A673 (cell line): ENCODE measurements at regions of chr3 and their contacts with region 1.

Region 1: GRCh38 chr3:87792534-87793336 is 266.1 kb downstream of the CGGBP1 start:
- DNase-seq: peak; percentile 81
- H3K4me3 ChIP-seq: peak within 1 kb of the TSS; percentile 68
- H3K27ac ChIP-seq: peak within 1 kb of the TSS; percentile 91
- H3K4me1 ChIP-seq: peaks cover 29% of the 10 kb centered on the region
- H3K27me3 ChIP-seq: no peaks in the 10 kb centered on the region
- CTCF ChIP-seq: peak; percentile 45

Region 2: GRCh38 chr3:87247430-87247773 is 545.3 kb before region 1 on chr3:
- CTCF ChIA-PET with region 1: no interaction called
- POLR2A ChIA-PET with region 1: no interaction called
- intact Hi-C with region 1: no loop called
- DNase-seq: no peak
- H3K4me3 ChIP-seq: no peak overlapping the region
- H3K27ac ChIP-seq: no peak overlapping the region
- H3K4me1 ChIP-seq: no peaks in the 10 kb centered on the region
- H3K27me3 ChIP-seq: no peaks in the 10 kb centered on the region
- CTCF ChIP-seq: no peak

Region 3: DNA sequence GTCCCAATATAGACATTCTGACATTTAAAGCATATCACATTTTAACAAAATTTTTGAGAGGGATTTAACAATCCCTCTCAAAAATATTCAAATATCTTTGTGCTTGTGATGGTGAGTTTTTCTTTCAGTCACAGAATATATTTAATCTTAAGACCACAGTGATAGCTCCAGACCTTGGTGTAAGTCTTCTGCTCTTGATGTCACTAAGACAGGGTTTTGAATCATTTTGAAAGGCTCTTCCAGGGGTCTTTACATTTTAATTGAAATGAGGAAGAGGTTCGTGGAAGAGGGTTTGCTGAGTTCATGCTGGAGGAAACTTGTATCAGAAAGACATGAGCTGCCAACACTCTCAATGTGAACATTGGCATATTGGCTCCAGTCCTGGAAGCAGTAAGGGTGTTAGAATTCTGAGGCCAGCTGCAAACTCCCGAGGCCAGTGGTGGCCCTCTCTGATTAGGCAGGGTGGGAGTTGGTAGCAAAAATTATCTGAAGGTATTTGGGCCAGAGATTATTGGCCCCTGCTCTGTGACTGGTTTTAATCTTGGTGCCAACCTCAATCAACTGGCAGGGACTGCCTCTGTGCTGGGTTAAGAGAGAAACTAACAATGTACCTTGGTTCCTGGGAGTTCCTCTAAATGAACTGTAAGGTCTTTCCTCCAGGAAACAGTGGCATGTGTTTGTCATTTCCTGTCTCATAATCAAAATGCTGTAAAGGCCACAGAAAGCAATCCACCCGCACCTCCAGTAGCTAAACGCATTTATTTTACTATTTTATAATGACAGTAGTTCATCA is 521.6 kb before region 1 on chr3:
- CTCF ChIA-PET with region 1: no interaction called
- POLR2A ChIA-PET with region 1: no interaction called
- intact Hi-C with region 1: loop called (anchors 5 kb)
- DNase-seq: peak; percentile 89
- H3K4me3 ChIP-seq: peak overlapping the region; percentile 50
- H3K27ac ChIP-seq: peak overlapping the region; percentile 92
- H3K4me1 ChIP-seq: peaks cover 61% of the 10 kb centered on the region
- H3K27me3 ChIP-seq: no peaks in the 10 kb centered on the region
- CTCF ChIP-seq: no peak

Region 4: DNA sequence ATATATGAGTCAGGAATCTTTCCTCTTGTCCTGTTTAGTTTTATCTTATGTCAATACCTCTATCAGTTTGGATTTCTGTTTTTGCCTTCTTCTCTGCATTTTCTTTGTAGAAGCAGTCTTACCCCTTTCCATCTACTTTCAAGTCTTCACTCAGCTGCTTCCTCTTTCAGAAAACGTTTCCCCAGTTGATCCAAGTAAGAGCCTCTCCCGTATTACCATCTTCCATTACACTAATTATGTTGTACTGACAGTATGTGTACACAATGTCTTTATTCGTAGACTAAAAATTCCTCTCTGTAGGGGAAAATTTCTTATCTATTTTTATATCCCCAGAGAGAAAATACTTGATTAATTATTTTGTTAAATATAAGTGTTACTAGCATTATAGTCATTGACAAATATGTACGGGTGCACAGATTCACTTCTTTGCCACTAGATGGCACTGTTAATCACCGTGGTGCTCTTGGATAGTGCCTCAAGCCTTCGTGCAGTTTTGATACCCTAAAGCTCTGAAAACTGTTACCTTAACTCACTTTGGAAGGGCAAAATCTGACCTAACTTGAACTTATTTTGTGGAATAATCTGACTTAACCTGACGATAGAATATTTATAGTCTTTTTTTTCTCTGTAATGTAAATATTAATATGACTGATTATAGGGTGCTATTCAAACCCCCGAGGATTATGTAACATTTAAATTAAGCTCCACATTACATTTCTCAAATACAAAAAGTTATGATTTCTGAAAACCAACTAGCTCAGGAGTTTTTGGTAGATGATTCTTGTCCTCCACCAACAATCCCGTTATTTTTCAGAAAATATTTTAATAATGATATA is 442.2 kb before region 1 on chr3:
- CTCF ChIA-PET with region 1: no interaction called
- POLR2A ChIA-PET with region 1: no interaction called
- intact Hi-C with region 1: loop called (anchors 10 kb)
- DNase-seq: peak; percentile 79
- H3K4me3 ChIP-seq: no peak overlapping the region
- H3K27ac ChIP-seq: peak overlapping the region; percentile 50
- H3K4me1 ChIP-seq: peaks cover 19% of the 10 kb centered on the region
- H3K27me3 ChIP-seq: no peaks in the 10 kb centered on the region
- CTCF ChIP-seq: peak; percentile 96

Region 5: GRCh38 chr3:87549208-87549607 is 243.5 kb before region 1 on chr3:
- CTCF ChIA-PET with region 1: no interaction called
- POLR2A ChIA-PET with region 1: no interaction called
- intact Hi-C with region 1: loop called (anchors 2 kb)
- DNase-seq: peak; percentile 82
- H3K4me3 ChIP-seq: no peak overlapping the region
- H3K27ac ChIP-seq: peak overlapping the region; percentile 99
- H3K4me1 ChIP-seq: peaks cover 57% of the 10 kb centered on the region
- H3K27me3 ChIP-seq: no peaks in the 10 kb centered on the region
- CTCF ChIP-seq: no peak

Region 6: DNA sequence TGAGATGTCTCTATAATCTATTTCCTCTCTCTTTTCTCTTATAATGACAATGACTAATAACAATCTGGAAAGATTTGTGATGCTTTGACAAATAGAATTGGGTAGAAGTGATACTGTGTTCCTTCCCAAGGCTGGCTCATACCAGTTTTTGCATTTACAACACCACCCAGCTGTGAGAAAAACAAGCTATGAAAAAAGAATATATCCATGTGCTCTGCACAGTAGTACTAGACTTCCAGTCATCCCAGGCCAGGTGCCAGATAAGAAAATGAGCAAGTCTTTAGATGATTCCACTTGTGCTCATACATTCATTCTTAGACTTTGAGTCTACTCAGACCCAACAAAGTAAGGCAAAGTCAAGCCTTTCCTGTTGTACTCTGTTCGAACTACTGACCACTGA is 166.2 kb before region 1 on chr3:
- CTCF ChIA-PET with region 1: no interaction called
- POLR2A ChIA-PET with region 1: no interaction called
- intact Hi-C with region 1: loop called (anchors 5 kb)
- DNase-seq: peak; percentile 91
- H3K4me3 ChIP-seq: no peak overlapping the region
- H3K27ac ChIP-seq: peak overlapping the region; percentile 74
- H3K4me1 ChIP-seq: peaks cover 32% of the 10 kb centered on the region
- H3K27me3 ChIP-seq: no peaks in the 10 kb centered on the region
- CTCF ChIP-seq: no peak

Region 7: GRCh38 chr3:87834327-87834726 is 41.6 kb after region 1 on chr3:
- CTCF ChIA-PET with region 1: no interaction called
- POLR2A ChIA-PET with region 1: no interaction called
- intact Hi-C with region 1: loop called (anchors 2 kb)
- DNase-seq: no peak
- H3K4me3 ChIP-seq: no peak overlapping the region
- H3K27ac ChIP-seq: peak overlapping the region; percentile 78
- H3K4me1 ChIP-seq: peaks cover 25% of the 10 kb centered on the region
- H3K27me3 ChIP-seq: no peaks in the 10 kb centered on the region
- CTCF ChIP-seq: no peak

Region 8: DNA sequence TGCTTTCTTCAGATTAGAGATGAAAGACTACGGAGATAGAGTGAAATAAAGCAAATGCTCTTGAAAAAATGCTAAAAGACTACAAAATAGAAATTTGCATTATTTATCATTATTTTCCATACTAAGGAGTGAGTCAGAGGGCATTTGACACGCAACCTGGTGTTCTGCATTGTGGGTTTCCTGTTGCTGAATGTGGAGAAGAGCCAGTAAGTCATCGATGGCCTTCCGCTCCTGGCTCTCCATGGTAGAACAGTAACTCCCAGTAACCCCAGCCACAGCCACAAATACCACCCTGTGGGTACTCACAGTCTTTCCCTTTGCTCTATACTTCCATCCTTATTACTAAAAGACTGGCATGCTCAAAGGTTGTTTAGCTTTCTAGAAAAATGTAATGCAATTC is 204.6 kb after region 1 on chr3:
- CTCF ChIA-PET with region 1: no interaction called
- POLR2A ChIA-PET with region 1: no interaction called
- intact Hi-C with region 1: loop called (anchors 2 kb)
- DNase-seq: peak; percentile 84
- H3K4me3 ChIP-seq: peak overlapping the region; percentile 28
- H3K27ac ChIP-seq: peak overlapping the region; percentile 77
- H3K4me1 ChIP-seq: peaks cover 34% of the 10 kb centered on the region
- H3K27me3 ChIP-seq: no peaks in the 10 kb centered on the region
- CTCF ChIP-seq: no peak

Region 9: GRCh38 chr3:88219138-88219792 is 426.5 kb after region 1 on chr3:
- CTCF ChIA-PET with region 1: no interaction called
- POLR2A ChIA-PET with region 1: no interaction called
- intact Hi-C with region 1: no loop called
- DNase-seq: peak; percentile 92
- H3K4me3 ChIP-seq: no peak overlapping the region
- H3K27ac ChIP-seq: no peak overlapping the region
- H3K4me1 ChIP-seq: peaks cover 46% of the 10 kb centered on the region
- H3K27me3 ChIP-seq: no peaks in the 10 kb centered on the region
- CTCF ChIP-seq: peak; percentile 84

Region 10: DNA sequence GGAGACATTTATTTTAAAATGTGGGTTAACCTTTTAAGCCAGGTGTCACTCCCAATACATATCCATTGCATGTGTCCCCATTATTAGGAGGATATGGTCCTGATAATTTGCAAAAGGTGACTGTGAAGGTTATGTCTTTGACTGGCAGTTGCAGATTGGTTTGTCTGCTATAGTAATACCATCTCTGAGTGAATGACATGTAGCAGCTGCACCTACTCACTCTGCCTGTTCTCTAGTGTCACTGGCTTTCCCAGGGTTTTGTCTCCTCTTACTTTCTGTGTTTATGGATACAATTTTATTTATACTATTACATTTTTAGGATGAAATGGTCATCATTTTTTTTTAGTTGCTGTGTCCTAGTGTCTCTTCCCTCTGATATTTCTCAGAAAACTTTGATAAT is 750.2 kb after region 1 on chr3:
- CTCF ChIA-PET with region 1: no interaction called
- POLR2A ChIA-PET with region 1: no interaction called
- intact Hi-C with region 1: no loop called
- DNase-seq: no peak
- H3K4me3 ChIP-seq: no peak overlapping the region
- H3K27ac ChIP-seq: no peak overlapping the region
- H3K4me1 ChIP-seq: no peaks in the 10 kb centered on the region
- H3K27me3 ChIP-seq: no peaks in the 10 kb centered on the region
- CTCF ChIP-seq: no peak